ENCODE measurements at regions of chr11 and their contacts with region 1.

Region 1: GRCh38 chr11:94786264-94787126 is 18.3 kb downstream of the AMOTL1 start:
- DNase-seq: peak in 2 of 9 experiments; percentile 28 to 53
- ATAC-seq: peak; percentile 38
- H3K4me3 ChIP-seq: no peak overlapping the region
- H3K4me3 Mint-ChIP-seq: no peak overlapping the region
- H3K27ac ChIP-seq: no peak overlapping the region
- H3K27ac Mint-ChIP-seq: no peak overlapping the region
- H3K4me1 ChIP-seq: no peaks in the 10 kb centered on the region
- H3K4me1 Mint-ChIP-seq: no peaks in the 10 kb centered on the region
- H3K27me3 ChIP-seq: no peaks in the 10 kb centered on the region
- H3K27me3 Mint-ChIP-seq: peaks cover 6% of the 10 kb centered on the region
- CTCF ChIP-seq: peak; percentile 60

Region 2: GRCh38 chr11:94650756-94651155 is 135.7 kb before region 1 on chr11:
- CTCF ChIA-PET with region 1: no interaction called
- POLR2A ChIA-PET with region 1: no interaction called
- intact Hi-C with region 1: no loop called
- DNase-seq: no peak
- ATAC-seq: no peak
- H3K4me3 ChIP-seq: no peak overlapping the region
- H3K4me3 Mint-ChIP-seq: no peak overlapping the region
- H3K27ac ChIP-seq: no peak overlapping the region
- H3K27ac Mint-ChIP-seq: no peak overlapping the region
- H3K4me1 ChIP-seq: no peaks in the 10 kb centered on the region
- H3K4me1 Mint-ChIP-seq: no peaks in the 10 kb centered on the region
- H3K27me3 ChIP-seq: no peaks in the 10 kb centered on the region
- H3K27me3 Mint-ChIP-seq: peaks cover 1% of the 10 kb centered on the region
- CTCF ChIP-seq: no peak

Region 3: GRCh38 chr11:94876645-94877442 is 90.3 kb after region 1 on chr11:
- CTCF ChIA-PET with region 1: no interaction called
- POLR2A ChIA-PET with region 1: no interaction called
- intact Hi-C with region 1: loop called in 1 of 2 experiments (anchors 1 kb)
- DNase-seq: peak in 7 of 9 experiments; percentile 13 to 44 (median 37)
- ATAC-seq: peak; percentile 56
- H3K4me3 ChIP-seq: no peak overlapping the region
- H3K4me3 Mint-ChIP-seq: no peak overlapping the region
- H3K27ac ChIP-seq: no peak overlapping the region
- H3K27ac Mint-ChIP-seq: no peak overlapping the region
- H3K4me1 ChIP-seq: peaks cover 9% of the 10 kb centered on the region
- H3K4me1 Mint-ChIP-seq: peaks cover 14% of the 10 kb centered on the region
- H3K27me3 ChIP-seq: no peaks in the 10 kb centered on the region
- H3K27me3 Mint-ChIP-seq: no peaks in the 10 kb centered on the region
- CTCF ChIP-seq: no peak